MCF 10A (cell line): ENCODE measurements at regions of chr10 and their contacts with region 1.

Region 1: GRCh38 chr10:23994479-23995046 is 214.4 kb upstream of the KIAA1217 start:
- DNase-seq: peak; percentile 75
- H3K4me3 Mint-ChIP-seq: no peak overlapping the region
- H3K27ac Mint-ChIP-seq: no peak overlapping the region
- H3K4me1 Mint-ChIP-seq: no peaks in the 10 kb centered on the region
- H3K27me3 Mint-ChIP-seq: peaks cover 33% of the 10 kb centered on the region
- CTCF ChIP-seq: peak; percentile 80

Region 2: DNA sequence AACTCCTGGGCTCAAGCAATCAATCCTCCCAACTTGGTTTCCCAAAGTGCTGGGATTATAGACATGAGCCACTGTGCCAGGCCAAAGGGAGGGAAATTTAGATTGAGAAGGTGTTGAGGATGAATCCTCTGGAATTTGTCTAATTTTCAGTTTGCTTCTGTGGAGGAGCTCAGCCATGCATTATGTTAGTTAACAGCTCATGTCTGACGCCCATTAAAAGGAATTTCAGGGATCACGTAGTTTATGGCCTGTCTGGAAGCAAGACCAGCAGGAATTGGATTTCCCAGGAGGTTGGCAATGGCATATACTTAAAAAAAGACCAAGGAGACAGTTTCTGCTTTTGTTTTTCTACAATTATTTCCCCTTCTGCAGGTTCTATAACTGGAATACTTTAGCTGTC is 389.9 kb before region 1 on chr10:
- CTCF ChIA-PET with region 1: no interaction called
- POLR2A ChIA-PET with region 1: no interaction called
- intact Hi-C with region 1: no loop called
- DNase-seq: no peak
- H3K4me3 Mint-ChIP-seq: no peak overlapping the region
- H3K27ac Mint-ChIP-seq: no peak overlapping the region
- H3K4me1 Mint-ChIP-seq: no peaks in the 10 kb centered on the region
- H3K27me3 Mint-ChIP-seq: no peaks in the 10 kb centered on the region
- CTCF ChIP-seq: no peak

Region 3: DNA sequence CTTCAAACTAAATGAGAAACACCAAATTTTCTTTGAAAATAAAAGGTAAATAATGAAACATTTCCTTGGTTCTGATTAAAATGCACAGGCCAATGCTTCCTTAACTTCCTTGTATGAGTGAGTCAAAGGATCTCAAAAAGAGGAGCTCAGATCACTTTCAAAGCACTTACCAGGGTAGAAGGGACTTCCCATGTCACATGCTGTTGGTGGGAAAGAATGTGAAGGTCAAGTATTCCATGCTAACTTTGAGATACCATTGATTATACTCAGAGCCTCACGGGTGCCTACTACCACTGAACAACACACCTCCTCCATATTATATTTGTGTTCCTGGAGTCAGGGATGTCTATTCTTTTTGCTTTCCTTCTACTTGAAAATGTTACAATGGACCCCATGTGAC is 19.1 kb before region 1 on chr10:
- CTCF ChIA-PET with region 1: interaction called, 29 read pairs
- POLR2A ChIA-PET with region 1: no interaction called
- intact Hi-C with region 1: no loop called
- DNase-seq: no peak
- H3K4me3 Mint-ChIP-seq: no peak overlapping the region
- H3K27ac Mint-ChIP-seq: no peak overlapping the region
- H3K4me1 Mint-ChIP-seq: no peaks in the 10 kb centered on the region
- H3K27me3 Mint-ChIP-seq: peaks cover 74% of the 10 kb centered on the region
- CTCF ChIP-seq: no peak

Region 4: GRCh38 chr10:24132741-24133140 is 138.2 kb after region 1 on chr10:
- CTCF ChIA-PET with region 1: interaction called, 17 read pairs
- POLR2A ChIA-PET with region 1: no interaction called
- intact Hi-C with region 1: no loop called
- DNase-seq: peak; percentile 1
- H3K4me3 Mint-ChIP-seq: no peak overlapping the region
- H3K27ac Mint-ChIP-seq: no peak overlapping the region
- H3K4me1 Mint-ChIP-seq: no peaks in the 10 kb centered on the region
- H3K27me3 Mint-ChIP-seq: peaks cover 37% of the 10 kb centered on the region
- CTCF ChIP-seq: no peak

Region 5: DNA sequence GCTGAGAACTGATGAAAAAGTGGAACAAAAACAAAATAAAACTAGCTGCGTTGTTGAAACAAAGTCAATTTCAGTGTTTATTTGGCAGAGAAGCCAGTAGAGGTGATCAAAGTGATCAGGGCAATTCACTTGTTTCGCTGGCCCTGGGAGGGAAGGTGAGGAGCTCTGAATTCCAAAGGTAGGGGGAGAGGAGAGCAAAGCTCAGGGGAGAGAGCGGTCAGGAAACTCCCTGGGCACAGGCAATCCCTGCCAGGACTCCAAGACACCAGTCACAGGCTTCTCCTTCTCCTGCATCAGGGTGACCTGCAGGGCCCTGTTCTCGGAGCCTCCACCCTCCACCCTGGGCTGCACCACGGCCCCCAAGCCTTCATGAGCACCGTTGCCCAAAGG is 207.6 kb after region 1 on chr10:
- CTCF ChIA-PET with region 1: interaction called, 97 read pairs
- POLR2A ChIA-PET with region 1: no interaction called
- intact Hi-C with region 1: no loop called
- DNase-seq: no peak
- H3K4me3 Mint-ChIP-seq: no peak overlapping the region
- H3K27ac Mint-ChIP-seq: no peak overlapping the region
- H3K4me1 Mint-ChIP-seq: no peaks in the 10 kb centered on the region
- H3K27me3 Mint-ChIP-seq: no peaks in the 10 kb centered on the region
- CTCF ChIP-seq: no peak

Region 6: DNA sequence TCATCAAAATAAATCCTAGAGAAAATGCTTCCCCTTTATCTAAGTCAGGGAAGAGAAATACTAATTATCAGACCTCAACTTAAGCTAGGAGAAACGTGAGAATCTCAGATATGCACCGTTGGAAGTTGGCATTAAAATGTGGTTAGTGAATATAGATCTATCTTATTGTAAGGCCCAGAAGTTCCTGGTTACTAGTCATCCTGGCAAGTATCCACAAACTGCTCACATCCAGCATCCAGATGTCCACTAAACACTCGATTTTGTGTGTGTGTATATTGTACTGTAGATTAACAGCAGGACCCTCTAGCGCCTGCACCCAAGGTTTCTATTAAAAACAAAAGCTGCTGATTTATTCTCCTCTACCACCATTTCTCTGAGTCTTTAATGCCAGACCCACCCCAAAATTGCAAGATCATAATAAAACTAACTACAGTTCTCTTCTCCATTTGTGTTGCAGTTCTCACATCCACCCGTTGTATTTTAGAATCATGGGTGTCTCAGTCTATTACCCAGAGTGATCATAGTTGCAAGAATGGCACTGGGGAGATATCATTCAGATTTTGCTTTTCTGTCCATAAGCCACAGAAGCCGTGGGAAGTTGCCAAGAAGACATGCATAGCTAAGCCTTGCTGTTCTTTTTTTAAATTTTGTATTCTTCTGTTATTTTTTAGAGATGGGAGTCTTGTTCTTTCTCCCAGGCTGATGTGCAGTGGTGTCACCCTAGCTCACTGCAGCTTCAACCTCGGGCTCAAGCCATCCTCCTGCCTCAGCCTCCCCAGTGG is 379.8 kb after region 1 on chr10:
- CTCF ChIA-PET with region 1: interaction called, 19 read pairs
- POLR2A ChIA-PET with region 1: no interaction called
- intact Hi-C with region 1: no loop called
- DNase-seq: no peak
- H3K4me3 Mint-ChIP-seq: no peak overlapping the region
- H3K27ac Mint-ChIP-seq: peak overlapping the region; percentile 35
- H3K4me1 Mint-ChIP-seq: no peaks in the 10 kb centered on the region
- H3K27me3 Mint-ChIP-seq: no peaks in the 10 kb centered on the region
- CTCF ChIP-seq: no peak

Region 7: DNA sequence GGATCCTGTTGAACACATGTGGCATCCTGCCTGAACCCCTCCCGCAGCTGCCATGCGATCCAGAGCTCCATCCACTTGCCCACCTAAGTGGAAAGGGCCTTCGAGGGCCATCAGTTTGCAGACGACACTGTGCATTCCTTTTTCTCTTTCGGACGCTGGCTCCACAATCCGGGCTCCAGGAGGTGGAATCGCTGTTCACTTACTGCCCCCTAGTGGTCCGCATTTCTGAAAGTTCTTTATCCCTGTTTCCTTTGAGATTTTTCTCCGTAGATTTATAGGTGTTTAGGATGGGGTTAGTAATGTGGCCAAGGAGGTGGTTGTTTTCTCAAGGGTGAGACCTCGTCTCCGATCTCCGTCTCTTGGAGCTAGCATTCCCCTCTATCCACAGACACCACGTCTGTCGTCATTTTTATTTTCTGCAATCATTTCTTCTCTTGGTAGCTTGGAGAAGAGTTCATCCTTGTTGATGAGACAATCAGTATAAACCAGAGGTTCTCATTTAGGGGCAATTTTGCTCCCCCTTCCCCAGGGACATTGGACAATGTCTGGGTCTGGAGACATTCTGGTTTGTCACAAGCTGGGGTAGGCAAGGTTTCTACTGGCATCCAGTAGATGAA is 524.5 kb after region 1 on chr10:
- CTCF ChIA-PET with region 1: interaction called, 79 read pairs
- POLR2A ChIA-PET with region 1: no interaction called
- intact Hi-C with region 1: loop called (anchors 1 kb)
- DNase-seq: peak; percentile 65
- H3K4me3 Mint-ChIP-seq: no peak overlapping the region
- H3K27ac Mint-ChIP-seq: no peak overlapping the region
- H3K4me1 Mint-ChIP-seq: peaks cover 7% of the 10 kb centered on the region
- H3K27me3 Mint-ChIP-seq: no peaks in the 10 kb centered on the region
- CTCF ChIP-seq: peak; percentile 56

Region 8: GRCh38 chr10:24664991-24665390 is 670.4 kb after region 1 on chr10:
- CTCF ChIA-PET with region 1: no interaction called
- POLR2A ChIA-PET with region 1: no interaction called
- intact Hi-C with region 1: no loop called
- DNase-seq: no peak
- H3K4me3 Mint-ChIP-seq: no peak overlapping the region
- H3K27ac Mint-ChIP-seq: no peak overlapping the region
- H3K4me1 Mint-ChIP-seq: no peaks in the 10 kb centered on the region
- H3K27me3 Mint-ChIP-seq: no peaks in the 10 kb centered on the region
- CTCF ChIP-seq: no peak